ENCODE measurements at regions of chr6 and their contacts with region 1.

Region 1: DNA sequence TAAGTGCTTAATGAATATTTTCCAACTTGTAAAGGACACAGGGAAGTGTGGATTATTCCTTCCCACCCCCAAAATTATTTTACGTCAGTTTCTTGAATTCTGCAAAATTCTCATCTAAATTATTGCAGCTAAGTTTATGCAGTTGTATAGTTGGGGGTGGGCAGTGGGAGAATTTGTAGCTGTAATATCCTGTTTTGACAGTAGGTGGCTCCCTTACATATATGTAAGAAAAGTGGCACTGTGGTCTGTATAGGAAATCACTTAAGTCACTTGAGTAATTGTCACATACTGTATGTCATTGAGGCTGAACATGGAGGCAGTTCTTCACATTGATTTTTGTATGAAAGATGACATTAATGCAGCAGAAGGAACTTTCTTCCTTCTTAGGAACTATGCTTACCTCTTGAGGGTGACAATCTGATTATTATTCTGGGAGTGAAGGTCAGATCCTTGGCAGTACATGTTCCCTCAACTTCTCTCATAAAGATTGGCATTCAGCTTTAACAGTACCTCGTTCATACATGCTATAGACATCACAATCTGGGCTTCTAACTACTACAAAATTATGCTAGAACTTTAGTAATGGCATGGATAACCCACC is 14.7 kb upstream of the CFAP206 start:
- DNase-seq: no peak
- H3K4me3 ChIP-seq: no peak overlapping the region
- H3K27ac ChIP-seq: no peak overlapping the region
- H3K4me1 ChIP-seq: no peaks in the 10 kb centered on the region
- H3K27me3 ChIP-seq: no peaks in the 10 kb centered on the region
- CTCF ChIP-seq: peak in 2 of 3 experiments; percentile 38 to 59; a peak in 2 of 4 replicates
- EP300 ChIP-seq: no peak
- POLR2A ChIP-seq: no peak
- RAD21 ChIP-seq: peak; percentile 70 to 72

Region 2: GRCh38 chr6:87066449-87067333 is 326.4 kb before region 1 on chr6:
- CTCF ChIA-PET with region 1: interaction called, 26 read pairs
- POLR2A ChIA-PET with region 1: no interaction called
- DNase-seq: no peak
- H3K4me3 ChIP-seq: no peak overlapping the region
- H3K27ac ChIP-seq: no peak overlapping the region
- H3K4me1 ChIP-seq: peaks cover 0 to 3% (median 1%) of the 10 kb centered on the region in 4 experiments; a peak in 1 of 7 replicates
- H3K27me3 ChIP-seq: no peaks in the 10 kb centered on the region
- CTCF ChIP-seq: peak in 2 of 3 experiments; percentile 46 to 58; a peak in 3 of 4 replicates
- EP300 ChIP-seq: no peak
- POLR2A ChIP-seq: no peak
- RAD21 ChIP-seq: peak; percentile 86 to 88

Region 3: DNA sequence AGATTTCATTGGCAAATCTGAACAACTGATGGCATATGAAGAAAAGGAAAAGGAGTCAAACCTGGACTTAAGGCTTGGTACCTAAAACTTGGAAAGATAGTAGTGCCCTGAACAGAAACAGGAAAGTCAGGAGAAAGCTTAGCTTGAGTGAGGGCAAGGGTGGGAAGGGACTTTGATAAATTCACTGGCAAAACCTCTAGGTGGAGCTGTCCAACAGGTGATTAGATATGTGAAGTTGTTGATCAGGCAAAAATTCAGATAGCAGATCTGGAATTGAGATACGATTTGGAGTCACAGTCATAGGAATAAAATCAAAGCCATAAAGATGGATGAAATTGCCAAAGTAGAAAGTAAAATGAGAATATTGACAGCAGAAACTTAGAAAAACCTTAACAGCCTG is 253.9 kb before region 1 on chr6:
- CTCF ChIA-PET with region 1: interaction called, 25 read pairs
- POLR2A ChIA-PET with region 1: no interaction called
- DNase-seq: no peak
- H3K4me3 ChIP-seq: no peak overlapping the region
- H3K27ac ChIP-seq: no peak overlapping the region
- H3K4me1 ChIP-seq: no peaks in the 10 kb centered on the region
- H3K27me3 ChIP-seq: no peaks in the 10 kb centered on the region
- CTCF ChIP-seq: peak in 2 of 3 experiments; percentile 61 to 80; a peak in 3 of 4 replicates
- EP300 ChIP-seq: no peak
- POLR2A ChIP-seq: no peak
- RAD21 ChIP-seq: peak; percentile 90 to 92

Region 4: GRCh38 chr6:87322304-87323212 is 70.6 kb before region 1 on chr6 and contains the start of gene SMIM8:
- CTCF ChIA-PET with region 1: interaction called, 12 read pairs
- POLR2A ChIA-PET with region 1: no interaction called
- DNase-seq: peak; percentile 57 to 97
- H3K4me3 ChIP-seq: peak within 1 kb of the TSS; percentile 86 to 99 (median 96)
- H3K27ac ChIP-seq: peak within 1 kb of the TSS; percentile 81
- H3K4me1 ChIP-seq: peaks cover 0 to 2% (median 0%) of the 10 kb centered on the region in 4 experiments; a peak in 2 of 7 replicates
- H3K27me3 ChIP-seq: no peaks in the 10 kb centered on the region
- CTCF ChIP-seq: peak; percentile 91 to 97 (median 96)
- EP300 ChIP-seq: peak in 1 of 2 experiments; percentile 57; a peak in 1 of 3 replicates
- POLR2A ChIP-seq: peak; percentile 87 to 97
- RAD21 ChIP-seq: peak; percentile 63 to 69
- total RNA-seq, gene SMIM8: 8.6 and 10.7 TPM in 2 replicates

Region 5: DNA sequence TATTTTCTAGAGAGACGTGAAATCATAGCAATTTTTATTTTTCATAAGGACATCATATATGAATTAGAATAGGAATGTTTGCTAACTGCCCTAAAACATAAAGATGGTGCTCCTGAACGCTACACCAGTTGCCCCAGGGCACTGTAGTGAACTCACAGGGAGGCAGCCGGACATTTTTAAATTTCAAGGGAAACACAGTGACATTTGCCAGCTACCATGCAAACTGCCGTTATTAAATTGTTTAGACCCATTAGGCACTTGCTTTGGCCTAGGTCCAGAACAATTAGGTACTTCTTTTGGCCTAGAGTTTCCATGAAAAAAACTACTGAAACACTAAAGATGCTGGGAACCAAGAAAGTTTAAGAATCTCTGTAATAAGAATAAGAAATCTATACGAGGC is 10.3 kb before region 1 on chr6:
- CTCF ChIA-PET with region 1: interaction called, 10 read pairs
- POLR2A ChIA-PET with region 1: no interaction called
- DNase-seq: no peak
- H3K4me3 ChIP-seq: no peak overlapping the region
- H3K27ac ChIP-seq: no peak overlapping the region
- H3K4me1 ChIP-seq: no peaks in the 10 kb centered on the region
- H3K27me3 ChIP-seq: no peaks in the 10 kb centered on the region
- CTCF ChIP-seq: no peak
- EP300 ChIP-seq: no peak
- POLR2A ChIP-seq: no peak
- RAD21 ChIP-seq: no peak

Region 6: DNA sequence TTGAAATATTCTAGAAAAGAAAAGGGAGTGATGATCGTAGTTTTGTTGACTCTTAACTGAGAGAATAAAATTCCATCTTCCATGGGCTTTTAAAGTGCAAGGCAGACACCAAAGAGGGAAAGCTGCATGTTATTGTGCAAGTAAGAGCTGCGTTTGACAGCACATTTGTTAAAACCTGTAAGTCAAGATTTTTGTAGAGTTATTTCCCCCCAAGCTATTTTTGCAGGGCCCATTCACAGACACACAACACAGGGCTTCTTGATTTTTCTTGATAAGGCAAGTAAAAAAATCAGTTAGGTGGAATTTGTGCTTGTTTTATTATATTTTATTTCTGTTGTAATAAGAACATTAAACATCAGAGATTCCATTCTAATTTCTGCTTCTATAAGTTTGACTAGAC is 28.5 kb after region 1 on chr6:
- CTCF ChIA-PET with region 1: interaction called, 15 read pairs
- POLR2A ChIA-PET with region 1: no interaction called
- DNase-seq: no peak
- H3K4me3 ChIP-seq: no peak overlapping the region
- H3K27ac ChIP-seq: no peak overlapping the region
- H3K4me1 ChIP-seq: no peaks in the 10 kb centered on the region
- H3K27me3 ChIP-seq: no peaks in the 10 kb centered on the region
- CTCF ChIP-seq: no peak
- EP300 ChIP-seq: no peak
- POLR2A ChIP-seq: no peak
- RAD21 ChIP-seq: no peak

Region 7: GRCh38 chr6:87553159-87553765 is 160.1 kb after region 1 on chr6:
- CTCF ChIA-PET with region 1: no interaction called
- POLR2A ChIA-PET with region 1: no interaction called
- DNase-seq: no peak
- H3K4me3 ChIP-seq: no peak overlapping the region
- H3K27ac ChIP-seq: no peak overlapping the region
- H3K4me1 ChIP-seq: no peaks in the 10 kb centered on the region
- H3K27me3 ChIP-seq: no peaks in the 10 kb centered on the region
- CTCF ChIP-seq: no peak
- EP300 ChIP-seq: no peak
- POLR2A ChIP-seq: no peak
- RAD21 ChIP-seq: no peak

Region 8: GRCh38 chr6:87600576-87600975 is 207.5 kb after region 1 on chr6:
- CTCF ChIA-PET with region 1: no interaction called
- POLR2A ChIA-PET with region 1: no interaction called
- DNase-seq: no peak
- H3K4me3 ChIP-seq: no peak overlapping the region
- H3K27ac ChIP-seq: no peak overlapping the region
- H3K4me1 ChIP-seq: peaks cover 0 to 4% (median 1%) of the 10 kb centered on the region in 4 experiments; a peak in 3 of 7 replicates
- H3K27me3 ChIP-seq: no peaks in the 10 kb centered on the region
- CTCF ChIP-seq: no peak
- EP300 ChIP-seq: no peak
- POLR2A ChIP-seq: no peak
- RAD21 ChIP-seq: no peak

Region 9: GRCh38 chr6:87808005-87808757 is 415.1 kb after region 1 on chr6:
- CTCF ChIA-PET with region 1: no interaction called
- POLR2A ChIA-PET with region 1: no interaction called
- DNase-seq: no peak
- H3K4me3 ChIP-seq: no peak overlapping the region
- H3K27ac ChIP-seq: no peak overlapping the region
- H3K4me1 ChIP-seq: no peaks in the 10 kb centered on the region
- H3K27me3 ChIP-seq: no peaks in the 10 kb centered on the region
- CTCF ChIP-seq: no peak
- EP300 ChIP-seq: no peak
- POLR2A ChIP-seq: no peak
- RAD21 ChIP-seq: no peak